ENCODE measurements at regions of chr12 and their contacts with region 1.

Region 1: GRCh38 chr12:13534645-13535398 is 338.3 kb downstream of the EMP1 start:
- DNase-seq: peak; percentile 46 to 99
- H3K4me3 ChIP-seq: peak overlapping the region in 2 of 4 experiments; percentile 33 to 42; a peak in 4 of 8 replicates
- H3K27ac ChIP-seq: no peak overlapping the region
- H3K4me1 ChIP-seq: peaks cover 4 to 7% (median 4%) of the 10 kb centered on the region in 4 experiments
- H3K27me3 ChIP-seq: no peaks in the 10 kb centered on the region; a peak in 1 of 7 replicates
- CTCF ChIP-seq: peak; percentile 67 to 96 (median 93)
- EP300 ChIP-seq: no peak
- POLR2A ChIP-seq: peak in 1 of 2 experiments; percentile 26; a peak in 1 of 3 replicates
- RAD21 ChIP-seq: peak; percentile 81 to 90

Region 2: GRCh38 chr12:13255792-13256691 is 278.8 kb before region 1 on chr12:
- CTCF ChIA-PET with region 1: interaction called, 30 read pairs
- POLR2A ChIA-PET with region 1: interaction called, 4 read pairs
- DNase-seq: peak; percentile 90 to 99
- H3K4me3 ChIP-seq: peak overlapping the region; percentile 21 to 50 (median 30); a peak in 5 of 8 replicates
- H3K27ac ChIP-seq: peak overlapping the region; percentile 28
- H3K4me1 ChIP-seq: peaks cover 2 to 12% (median 7%) of the 10 kb centered on the region in 4 experiments; a peak in 6 of 7 replicates
- H3K27me3 ChIP-seq: no peaks in the 10 kb centered on the region
- CTCF ChIP-seq: peak; percentile 92 to 100 (median 99)
- EP300 ChIP-seq: 0 out of 3 replicates have a peak, but pooled peaks of 1 of the 2 experiments have one; percentile 28
- POLR2A ChIP-seq: peak in 1 of 2 experiments; percentile 65; a peak in 2 of 3 replicates
- RAD21 ChIP-seq: peak; percentile 91 to 93

Region 3: DNA sequence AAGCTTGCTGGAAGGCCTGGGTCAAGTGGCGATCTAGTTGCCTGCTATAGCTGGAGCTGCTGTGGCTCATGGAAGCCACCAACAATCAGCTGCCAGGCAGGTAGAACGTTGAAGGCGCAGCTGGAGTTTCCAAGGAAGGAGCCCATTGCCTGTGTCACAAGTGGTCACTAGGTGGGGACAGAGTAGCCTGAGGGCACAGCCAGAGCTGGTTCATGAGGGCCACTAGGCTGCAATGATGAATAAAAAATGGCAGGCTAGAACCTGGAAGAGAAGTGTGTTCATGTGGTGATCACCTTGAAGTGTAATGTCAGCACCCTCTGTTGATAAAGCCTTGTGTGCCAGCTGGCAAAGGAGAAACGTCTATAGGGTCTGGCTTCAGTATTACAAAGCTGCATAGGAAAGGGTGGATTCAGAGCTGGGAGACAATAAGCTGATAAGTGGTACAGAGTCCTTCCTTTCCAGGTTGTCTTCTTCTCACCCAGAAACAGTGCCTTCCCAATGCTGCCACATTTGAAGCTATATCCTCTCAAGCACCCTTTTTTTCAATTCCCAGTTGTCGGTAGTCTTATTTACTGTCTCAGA is 172.5 kb before region 1 on chr12:
- CTCF ChIA-PET with region 1: interaction called, 13 read pairs
- POLR2A ChIA-PET with region 1: no interaction called
- DNase-seq: peak; percentile 49 to 84
- H3K4me3 ChIP-seq: no peak overlapping the region
- H3K27ac ChIP-seq: no peak overlapping the region
- H3K4me1 ChIP-seq: no peaks in the 10 kb centered on the region
- H3K27me3 ChIP-seq: no peaks in the 10 kb centered on the region
- CTCF ChIP-seq: peak; percentile 84 to 96 (median 92)
- EP300 ChIP-seq: no peak
- POLR2A ChIP-seq: no peak
- RAD21 ChIP-seq: peak; percentile 80 to 89

Region 4: GRCh38 chr12:13390381-13390861 is 144.4 kb before region 1 on chr12:
- CTCF ChIA-PET with region 1: no interaction called
- POLR2A ChIA-PET with region 1: no interaction called
- DNase-seq: peak in 1 of 2 experiments; percentile 41
- H3K4me3 ChIP-seq: no peak overlapping the region
- H3K27ac ChIP-seq: no peak overlapping the region
- H3K4me1 ChIP-seq: no peaks in the 10 kb centered on the region
- H3K27me3 ChIP-seq: no peaks in the 10 kb centered on the region
- CTCF ChIP-seq: no peak
- EP300 ChIP-seq: no peak
- POLR2A ChIP-seq: no peak
- RAD21 ChIP-seq: no peak

Region 5: DNA sequence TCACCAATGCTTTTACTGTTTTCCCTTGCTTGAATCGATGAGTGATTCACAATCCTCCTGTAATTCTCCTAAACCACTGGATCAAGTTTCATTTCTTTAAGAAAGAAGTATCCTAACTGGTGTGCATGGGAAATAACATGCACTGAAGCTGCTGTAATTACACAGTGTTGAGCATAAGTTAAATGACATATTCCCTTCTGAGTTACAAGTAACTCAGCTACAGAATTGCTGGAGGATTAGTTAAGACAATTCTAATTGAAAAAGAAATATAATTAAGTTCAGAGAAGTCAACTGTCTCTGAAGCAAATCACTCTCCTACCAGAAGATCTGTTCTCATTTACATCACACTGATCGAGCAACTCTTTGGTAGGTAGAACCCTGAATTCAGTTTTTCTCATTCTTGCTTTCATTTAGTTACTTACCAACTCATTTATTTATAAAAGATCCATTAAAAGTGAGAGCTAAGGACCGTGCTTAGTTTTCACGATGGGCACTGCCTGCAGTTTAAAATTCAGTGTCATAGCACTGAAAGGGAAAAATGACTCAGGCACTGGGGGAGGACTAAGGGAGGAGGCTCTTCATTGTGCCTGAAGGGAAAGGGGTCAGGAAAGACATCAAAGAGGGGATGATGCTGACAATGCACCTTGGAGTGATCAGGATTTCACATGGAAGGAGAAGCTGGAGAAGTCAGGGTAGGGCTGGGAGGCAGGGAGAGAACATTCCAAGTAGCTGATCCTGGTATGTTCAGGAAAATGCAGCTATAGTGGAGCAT is 11.1 kb before region 1 on chr12:
- CTCF ChIA-PET with region 1: interaction called, 25 read pairs
- POLR2A ChIA-PET with region 1: no interaction called
- DNase-seq: no peak
- H3K4me3 ChIP-seq: no peak overlapping the region
- H3K27ac ChIP-seq: no peak overlapping the region
- H3K4me1 ChIP-seq: no peaks in the 10 kb centered on the region
- H3K27me3 ChIP-seq: no peaks in the 10 kb centered on the region
- CTCF ChIP-seq: no peak
- EP300 ChIP-seq: no peak
- POLR2A ChIP-seq: no peak
- RAD21 ChIP-seq: no peak

Region 6: GRCh38 chr12:13609894-13610679 is 75.3 kb after region 1 on chr12:
- CTCF ChIA-PET with region 1: interaction called, 11 read pairs
- POLR2A ChIA-PET with region 1: no interaction called
- DNase-seq: no peak
- H3K4me3 ChIP-seq: no peak overlapping the region
- H3K27ac ChIP-seq: no peak overlapping the region
- H3K4me1 ChIP-seq: no peaks in the 10 kb centered on the region
- H3K27me3 ChIP-seq: no peaks in the 10 kb centered on the region
- CTCF ChIP-seq: no peak
- EP300 ChIP-seq: no peak
- POLR2A ChIP-seq: no peak
- RAD21 ChIP-seq: no peak